ENCODE measurements at regions of chr20 and their contacts with region 1.

Region 1: DNA sequence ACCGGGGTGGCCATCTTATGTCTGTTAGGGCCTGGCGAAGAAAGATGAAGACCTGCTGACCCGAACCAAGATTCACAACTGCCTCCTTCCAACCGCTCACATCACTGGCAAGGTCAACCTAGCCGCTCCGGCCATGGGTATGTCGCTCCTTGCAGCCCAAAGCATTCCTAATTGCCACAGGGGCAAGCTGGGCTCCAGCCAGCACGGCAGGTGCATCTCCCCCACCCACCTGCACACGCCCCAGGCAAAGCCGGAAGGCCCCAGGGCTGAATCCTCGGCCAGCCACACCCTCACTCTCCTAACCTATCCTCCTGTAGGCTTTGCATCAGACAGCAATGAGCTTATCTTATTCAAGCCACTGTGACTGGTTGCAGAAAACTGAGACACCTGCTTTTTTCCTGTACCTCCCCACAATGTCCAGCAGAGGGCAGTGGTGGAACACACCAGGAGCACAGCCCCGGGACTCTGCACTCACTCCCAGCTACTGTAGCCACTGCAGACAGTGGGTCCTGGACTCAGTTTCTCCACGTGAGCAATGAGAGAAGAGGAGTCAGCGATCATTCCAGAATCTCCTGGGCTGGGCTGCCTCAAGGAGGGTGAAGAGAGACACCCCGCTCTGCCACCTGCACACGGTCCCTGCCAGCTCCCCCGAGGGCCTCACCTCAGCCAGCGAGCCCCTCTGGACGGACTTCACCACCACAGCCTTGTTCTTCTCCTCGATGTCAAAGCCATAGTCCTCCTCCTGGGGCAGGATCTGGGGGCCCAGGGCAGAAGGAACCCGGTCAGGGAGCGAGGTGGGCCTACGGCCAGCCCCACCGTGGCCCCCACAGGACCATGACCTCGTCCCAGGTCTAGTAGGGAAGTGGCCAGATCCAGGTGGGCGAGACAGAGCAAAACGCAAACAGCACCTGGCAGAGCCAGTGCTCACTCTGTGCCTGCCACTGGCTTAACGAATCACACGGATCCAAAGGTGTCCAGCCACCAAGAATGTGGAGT is 170.0 kb downstream of the PREX1 start:
- DNase-seq: peak; percentile 78
- H3K4me3 ChIP-seq: no peak overlapping the region
- H3K27ac ChIP-seq: peak overlapping the region in 1 of 2 donors; percentile 54
- H3K4me1 ChIP-seq: peaks cover 11% of the 10 kb centered on the region
- H3K27me3 ChIP-seq: no peaks in the 10 kb centered on the region
- CTCF ChIP-seq: peak; percentile 91 to 98 (median 96)
- POLR2A ChIP-seq: no peak

Region 2: GRCh38 chr20:48828022-48828743 is 170.4 kb after region 1 on chr20:
- intact Hi-C with region 1: loop called (anchors 5 kb)
- DNase-seq: peak; percentile 66
- H3K4me3 ChIP-seq: peak overlapping the region; percentile 51 to 67
- H3K27ac ChIP-seq: peak overlapping the region; percentile 62 to 70
- H3K4me1 ChIP-seq: no peaks in the 10 kb centered on the region
- H3K27me3 ChIP-seq: no peaks in the 10 kb centered on the region
- CTCF ChIP-seq: peak in 2 of 4 experiments; percentile 44 to 61
- POLR2A ChIP-seq: peak; percentile 24

Region 3: GRCh38 chr20:48904365-48905296 is 246.9 kb after region 1 on chr20:
- intact Hi-C with region 1: loop called (anchors 1 kb)
- DNase-seq: peak; percentile 29
- H3K4me3 ChIP-seq: no peak overlapping the region
- H3K27ac ChIP-seq: no peak overlapping the region
- H3K4me1 ChIP-seq: no peaks in the 10 kb centered on the region
- H3K27me3 ChIP-seq: no peaks in the 10 kb centered on the region
- CTCF ChIP-seq: peak; percentile 71 to 90 (median 81)
- POLR2A ChIP-seq: no peak